OCI-LY7 (cell line): ENCODE measurements at regions of chr5 and their contacts with region 1.

Region 1: DNA sequence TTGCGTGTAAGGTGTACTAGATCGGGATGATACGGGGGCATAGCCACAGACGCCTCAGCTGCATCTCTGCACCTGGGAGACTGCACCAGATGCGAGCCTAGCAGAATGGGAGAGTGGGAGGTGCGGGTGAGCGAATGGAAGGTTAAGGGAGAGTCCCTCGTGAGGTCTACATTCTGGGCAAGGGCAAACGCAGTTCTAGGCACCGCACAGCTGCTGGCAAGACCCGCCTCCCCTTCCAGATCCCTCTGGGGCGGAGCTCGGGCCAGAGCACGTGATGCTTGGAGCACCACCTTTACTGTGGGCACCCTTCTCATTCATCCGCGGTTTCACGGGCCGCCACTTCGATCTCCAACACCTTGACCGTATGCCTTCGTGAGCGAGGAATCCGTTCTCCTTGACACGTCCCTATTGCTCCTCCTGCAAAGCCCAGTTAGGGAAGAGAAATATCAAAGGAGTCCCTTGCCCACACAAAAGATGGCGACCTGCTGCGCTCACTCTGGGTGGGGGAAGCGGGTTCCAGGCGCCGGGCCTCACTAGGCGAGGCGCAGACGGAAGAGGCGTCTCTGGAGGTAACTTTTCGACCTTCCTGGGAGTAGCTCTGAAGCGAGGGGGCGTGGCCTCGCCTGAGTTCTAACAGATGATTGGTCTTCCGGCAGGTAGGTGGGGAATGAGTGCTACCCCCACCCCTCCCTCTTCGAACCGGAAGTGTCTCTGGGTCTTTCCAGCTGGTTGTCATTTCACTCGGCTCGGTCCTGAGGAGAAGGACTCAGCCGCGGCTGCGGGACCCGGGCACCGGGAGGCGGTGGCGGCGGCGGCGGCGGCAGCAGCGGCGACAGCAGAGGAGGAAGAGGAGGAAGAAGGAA is at the start of gene CPEB4:
- DNase-seq: peak; percentile 100
- H3K4me3 ChIP-seq: peak within 1 kb of the TSS; percentile 88
- H3K27ac ChIP-seq: peak within 1 kb of the TSS; percentile 48
- H3K4me1 ChIP-seq: peaks cover 59% of the 10 kb centered on the region
- CTCF ChIP-seq: no peak
- total RNA-seq, gene CPEB4: 11.8 and 12.6 TPM in 2 replicates

Region 2: GRCh38 chr5:173789031-173789920 is 98.6 kb before region 1 on chr5:
- CTCF ChIA-PET with region 1: interaction called, 4 read pairs
- POLR2A ChIA-PET with region 1: interaction called, 10 read pairs
- intact Hi-C with region 1: loop called (anchors 1 kb)
- DNase-seq: peak; percentile 31
- H3K4me3 ChIP-seq: no peak overlapping the region
- H3K27ac ChIP-seq: no peak overlapping the region
- H3K4me1 ChIP-seq: peaks cover 63% of the 10 kb centered on the region
- CTCF ChIP-seq: no peak

Region 3: GRCh38 chr5:173823711-173824528 is 63.9 kb before region 1 on chr5:
- CTCF ChIA-PET with region 1: interaction called, 4 read pairs
- POLR2A ChIA-PET with region 1: interaction called, 122 read pairs
- intact Hi-C with region 1: loop called (anchors 1 kb)
- DNase-seq: no peak
- H3K4me3 ChIP-seq: peak overlapping the region; percentile 27
- H3K27ac ChIP-seq: peak overlapping the region; percentile 99
- H3K4me1 ChIP-seq: peaks cover 84% of the 10 kb centered on the region
- CTCF ChIP-seq: no peak

Region 4: GRCh38 chr5:173829817-173830216 is 58.0 kb before region 1 on chr5:
- CTCF ChIA-PET with region 1: interaction called, 4 read pairs
- POLR2A ChIA-PET with region 1: interaction called, 122 read pairs
- intact Hi-C with region 1: no loop called
- DNase-seq: peak; percentile 80
- H3K4me3 ChIP-seq: peak overlapping the region; percentile 32
- H3K27ac ChIP-seq: peak overlapping the region; percentile 75
- H3K4me1 ChIP-seq: peaks cover 88% of the 10 kb centered on the region
- CTCF ChIP-seq: no peak

Region 5: GRCh38 chr5:173907686-173908371 is 20.0 kb after region 1 on chr5:
- CTCF ChIA-PET with region 1: interaction called, 4 read pairs
- POLR2A ChIA-PET with region 1: interaction called, 107 read pairs
- intact Hi-C with region 1: no loop called
- DNase-seq: no peak
- H3K4me3 ChIP-seq: peak overlapping the region; percentile 50
- H3K27ac ChIP-seq: peak overlapping the region; percentile 75
- H3K4me1 ChIP-seq: peaks cover 86% of the 10 kb centered on the region
- CTCF ChIP-seq: no peak

Region 6: DNA sequence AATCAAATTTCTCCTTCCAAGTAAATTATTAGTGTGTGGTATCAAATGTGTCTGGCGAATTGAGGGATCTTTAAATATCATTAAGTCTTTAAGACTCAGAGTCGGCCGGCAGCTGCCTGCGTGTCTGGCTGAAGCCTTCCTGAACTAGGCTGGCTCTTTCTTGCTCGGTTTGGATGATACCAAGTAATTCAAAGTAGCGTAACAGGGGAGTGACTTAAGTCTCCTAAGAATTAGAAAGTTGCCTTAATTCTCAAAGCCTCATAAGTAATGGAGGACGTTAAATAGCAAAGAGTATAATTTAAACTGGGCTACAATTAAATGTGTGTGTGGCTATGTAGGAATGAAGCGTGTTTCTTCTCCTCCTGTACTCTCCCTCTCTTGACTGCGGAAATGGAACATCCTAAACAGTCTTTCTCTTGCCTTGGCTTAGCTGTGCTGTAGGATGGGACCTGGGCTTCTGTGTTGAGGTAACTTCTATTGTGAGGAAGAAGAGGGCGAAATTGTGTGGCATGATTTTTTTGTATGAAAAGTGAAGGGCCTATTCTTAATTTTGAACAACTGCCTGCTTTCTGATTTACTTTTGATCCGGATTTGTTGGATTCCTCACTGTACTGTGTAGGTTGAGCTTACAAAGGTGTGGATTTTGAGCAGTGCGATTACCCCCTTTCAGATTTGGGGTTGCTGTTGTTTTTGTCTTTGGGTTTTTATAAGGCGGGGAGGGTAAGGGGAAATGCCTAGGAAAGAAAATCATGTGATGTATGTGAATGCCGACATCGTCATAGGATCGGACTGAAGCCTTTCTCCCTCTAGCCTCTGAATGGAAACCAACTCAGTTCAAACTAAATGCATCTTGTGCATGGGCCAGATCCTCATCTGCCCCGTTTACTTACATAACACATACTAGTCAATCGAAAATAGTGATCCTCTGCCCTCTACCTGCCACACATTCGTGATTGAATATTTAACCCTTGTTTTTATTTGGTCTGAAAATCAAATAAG is 30.2 kb after region 1 on chr5:
- CTCF ChIA-PET with region 1: no interaction called
- POLR2A ChIA-PET with region 1: interaction called, 37 read pairs
- intact Hi-C with region 1: no loop called
- DNase-seq: peak; percentile 93
- H3K4me3 ChIP-seq: peak overlapping the region; percentile 72
- H3K27ac ChIP-seq: peak overlapping the region; percentile 88
- H3K4me1 ChIP-seq: peaks cover 91% of the 10 kb centered on the region
- CTCF ChIP-seq: peak; percentile 69

Region 7: DNA sequence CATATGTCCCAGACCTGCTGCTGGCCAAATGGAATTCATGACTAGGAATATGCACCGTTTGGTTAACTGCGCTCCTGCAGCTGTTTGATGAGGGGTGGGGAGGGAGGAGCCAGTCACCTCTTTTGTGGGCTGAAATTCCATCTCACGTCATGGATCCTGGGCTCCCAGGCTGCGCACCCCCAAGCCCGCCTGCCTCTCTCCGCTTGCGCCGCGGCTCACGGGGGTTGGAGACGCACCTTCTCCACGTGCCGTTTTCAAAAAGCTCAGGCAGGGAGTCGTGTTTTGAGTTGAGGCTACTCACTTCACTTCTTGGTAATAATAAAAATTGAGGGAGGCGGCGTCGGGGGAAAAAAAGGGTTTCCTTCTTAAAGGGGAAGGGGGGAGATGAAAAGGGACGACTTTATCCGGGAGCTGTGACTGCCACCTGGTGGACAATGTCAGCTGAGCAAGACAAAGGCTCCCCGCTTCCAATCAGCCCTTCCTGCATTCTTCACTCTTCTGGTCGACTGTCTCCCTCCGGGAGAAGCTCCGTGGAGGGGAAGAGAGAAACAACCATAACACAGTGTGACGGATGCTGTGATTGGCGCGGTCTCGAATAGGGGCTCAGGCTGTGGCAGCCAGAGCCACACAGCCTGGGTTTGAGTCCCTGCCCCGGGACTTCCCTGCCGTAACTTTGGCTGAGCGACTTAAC is 85.2 kb after region 1 on chr5:
- CTCF ChIA-PET with region 1: no interaction called
- POLR2A ChIA-PET with region 1: interaction called, 4 read pairs
- intact Hi-C with region 1: loop called (anchors 2 kb)
- DNase-seq: peak; percentile 85
- H3K4me3 ChIP-seq: peak overlapping the region; percentile 51
- H3K27ac ChIP-seq: no peak overlapping the region
- H3K4me1 ChIP-seq: peaks cover 29% of the 10 kb centered on the region
- CTCF ChIP-seq: peak; percentile 95

Region 8: DNA sequence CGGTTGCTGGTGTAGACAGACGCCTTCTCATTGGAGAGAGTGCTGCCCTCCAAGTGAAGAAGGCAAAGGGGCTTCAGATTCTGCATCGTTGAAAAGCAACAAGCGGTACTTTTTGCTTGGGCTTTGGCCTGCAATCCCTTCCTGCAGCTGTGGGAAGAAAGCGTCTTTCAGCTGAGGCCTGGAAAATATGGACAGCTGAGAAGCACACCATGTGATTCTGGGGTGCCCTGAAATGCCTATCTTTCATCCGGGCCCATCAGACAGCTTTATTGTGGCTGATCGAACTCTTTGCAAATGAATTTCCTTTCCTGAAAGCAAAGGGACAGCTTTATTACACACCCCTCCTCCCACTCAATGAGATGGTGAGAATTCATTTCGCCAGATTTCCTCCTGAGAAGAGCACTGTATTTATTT is 231.6 kb after region 1 on chr5:
- CTCF ChIA-PET with region 1: no interaction called
- POLR2A ChIA-PET with region 1: no interaction called
- intact Hi-C with region 1: no loop called
- DNase-seq: no peak
- H3K4me3 ChIP-seq: no peak overlapping the region
- H3K27ac ChIP-seq: no peak overlapping the region
- H3K4me1 ChIP-seq: no peaks in the 10 kb centered on the region
- CTCF ChIP-seq: no peak